Dorsolateral prefrontal cortex (tissue), 120 donors: ENCODE measurements at regions of chr22 and their contacts with region 1.

Region 1: DNA sequence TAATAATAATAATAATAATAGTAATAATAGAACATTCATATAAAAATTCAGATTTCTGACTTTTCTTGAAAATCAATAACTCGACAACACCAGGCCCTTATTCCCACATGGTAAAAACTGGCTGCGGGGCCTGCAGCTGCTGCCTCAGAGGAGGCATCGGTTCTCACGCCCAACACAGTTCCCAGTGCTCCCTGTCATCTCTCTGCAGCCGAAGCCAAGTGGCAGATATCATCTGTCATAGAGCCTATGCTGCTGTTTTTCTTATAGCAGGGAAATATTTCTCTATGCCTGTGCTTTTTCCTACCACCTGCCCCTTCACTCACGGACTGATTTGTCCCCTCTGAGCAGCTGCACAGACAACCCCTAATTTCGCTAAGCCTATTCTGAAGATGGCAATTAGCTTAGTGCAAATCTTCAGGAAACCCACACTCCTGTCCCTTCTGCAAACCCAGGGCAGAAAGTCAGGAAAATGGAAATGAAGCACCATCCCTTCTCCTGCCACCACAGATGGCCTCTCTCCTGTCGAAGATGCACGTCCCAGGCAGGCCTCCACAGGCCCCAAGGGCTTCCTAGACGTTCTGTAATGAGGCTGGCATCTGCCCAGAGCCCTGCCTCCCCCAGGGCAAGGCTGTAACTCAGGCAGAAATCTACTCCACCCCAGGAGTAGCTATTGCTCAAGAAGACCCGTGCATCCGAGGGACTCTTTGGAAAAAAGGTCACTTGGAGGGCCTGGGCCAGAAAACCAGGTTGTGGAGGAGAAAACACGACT is 66.6 kb downstream of the SYN3 start:
- DNase-seq: no peak
- H3K4me3 ChIP-seq: no peak overlapping the region
- H3K27ac ChIP-seq: peak overlapping the region in 12 of 59 donors; percentile 9 to 67 (median 30)
- H3K27me3 ChIP-seq: no peaks in the 10 kb centered on the region
- CTCF ChIP-seq: no peak

Region 2: GRCh38 chr22:32655068-32655467 is 336.5 kb before region 1 on chr22:
- intact Hi-C with region 1: loop called in 1 of 2 experiments (anchors 5 kb)
- DNase-seq: no peak
- H3K4me3 ChIP-seq: no peak overlapping the region
- H3K27ac ChIP-seq: no peak overlapping the region
- H3K27me3 ChIP-seq: no peaks in the 10 kb centered on the region
- CTCF ChIP-seq: no peak

Region 3: GRCh38 chr22:32839831-32840584 is 151.5 kb before region 1 on chr22:
- intact Hi-C with region 1: loop called in 1 of 2 experiments (anchors 10 kb)
- DNase-seq: no peak
- H3K4me3 ChIP-seq: peak overlapping the region in 3 of 59 donors; percentile 5 to 10 (median 6)
- H3K27ac ChIP-seq: peak overlapping the region in 38 of 59 donors; percentile 6 to 75 (median 49)
- H3K27me3 ChIP-seq: no peaks in the 10 kb centered on the region
- CTCF ChIP-seq: no peak

Region 4: DNA sequence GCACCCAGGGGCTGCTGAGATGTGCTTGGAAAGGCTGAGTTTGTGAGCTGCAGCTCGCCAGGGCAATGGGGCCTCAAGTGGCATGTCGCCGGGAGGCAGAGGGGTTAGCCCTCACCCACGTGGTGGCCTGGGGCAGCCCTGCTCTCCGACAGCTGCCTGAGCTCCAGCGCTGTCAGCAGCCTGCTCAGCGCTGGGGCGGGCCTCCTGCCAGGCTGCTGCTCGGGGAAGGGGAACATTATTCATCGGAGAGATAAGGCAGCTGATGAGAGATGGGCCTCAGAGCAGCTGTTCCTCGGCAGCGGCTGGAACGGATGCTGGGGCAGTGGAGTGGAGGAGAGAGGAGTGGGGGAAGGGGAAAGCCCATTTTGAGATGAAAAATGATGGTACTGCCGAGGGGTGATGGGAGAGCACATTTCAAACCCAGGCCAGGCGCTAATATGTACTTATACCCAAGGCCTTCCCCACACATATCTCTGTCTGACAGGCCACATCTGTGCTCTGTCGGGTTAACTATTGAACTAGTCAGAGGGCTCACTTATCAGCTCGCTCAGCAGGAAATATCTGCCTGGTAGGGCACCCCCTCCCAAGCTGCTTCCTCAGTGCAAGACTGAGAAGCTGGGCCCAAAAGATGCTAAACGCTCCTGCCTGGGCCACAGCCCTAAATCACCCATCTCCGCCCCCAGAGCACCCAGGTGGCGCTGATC is 110.5 kb before region 1 on chr22:
- intact Hi-C with region 1: no loop called
- DNase-seq: peak in 6 of 10 donors; percentile 32 to 57 (median 53)
- H3K4me3 ChIP-seq: no peak overlapping the region
- H3K27ac ChIP-seq: peak overlapping the region in 25 of 59 donors; percentile 8 to 71 (median 44)
- H3K27me3 ChIP-seq: no peaks in the 10 kb centered on the region
- CTCF ChIP-seq: no peak